A673 (cell line): ENCODE measurements at regions of chr19 and their contacts with region 1.

Region 1: DNA sequence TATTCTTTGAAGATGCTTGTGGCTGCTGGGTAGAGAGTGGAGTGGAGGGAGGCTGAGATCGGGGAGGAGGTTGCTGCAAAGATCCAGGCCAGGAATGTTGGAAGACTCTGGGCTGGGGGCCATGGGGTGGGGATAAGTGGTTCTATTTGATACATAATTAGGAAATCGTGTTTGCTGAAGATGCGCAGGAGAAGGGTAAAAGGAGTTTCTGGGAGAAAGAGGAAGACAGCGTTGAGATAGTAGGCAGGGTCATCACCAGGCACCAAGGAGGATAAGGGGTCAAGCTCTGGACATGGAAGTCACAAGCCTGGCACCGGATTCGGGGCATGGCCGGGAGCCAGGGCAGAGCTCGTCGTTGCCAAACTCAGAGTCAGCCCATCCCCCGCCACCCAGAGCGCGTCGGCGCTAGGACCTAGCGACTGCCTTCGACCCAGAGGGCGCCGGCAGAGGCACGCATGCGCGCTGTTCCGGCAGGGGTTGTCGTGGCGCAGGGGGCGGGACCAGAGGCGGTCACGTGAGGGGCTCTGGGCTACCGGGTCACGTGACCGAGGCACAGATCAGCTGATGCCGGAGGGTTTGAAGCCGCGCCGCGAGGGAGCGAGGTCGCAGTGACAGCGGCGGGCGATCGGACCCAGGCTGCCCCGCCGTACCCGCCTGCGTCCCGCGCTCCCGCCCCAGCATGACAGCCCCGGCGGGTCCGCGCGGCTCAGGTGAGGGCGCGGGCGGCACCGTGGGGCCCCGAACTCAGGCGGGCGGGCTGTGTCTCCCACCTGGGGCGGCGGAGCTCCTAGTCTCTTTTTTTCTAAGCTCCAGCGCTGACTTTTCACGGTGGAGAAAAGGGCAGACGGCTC is at the start of gene MCOLN1:
- DNase-seq: peak; percentile 98
- H3K4me3 ChIP-seq: peak within 1 kb of the TSS; percentile 66
- H3K27ac ChIP-seq: peak within 1 kb of the TSS; percentile 61
- H3K4me1 ChIP-seq: peaks cover 15% of the 10 kb centered on the region
- H3K27me3 ChIP-seq: no peaks in the 10 kb centered on the region
- CTCF ChIP-seq: no peak
- total RNA-seq, gene MCOLN1: 25.7 and 28.4 TPM in 2 replicates

Region 2: GRCh38 chr19:7507884-7508283 is 14.4 kb before region 1 on chr19:
- CTCF ChIA-PET with region 1: no interaction called
- POLR2A ChIA-PET with region 1: interaction called, 14 read pairs
- intact Hi-C with region 1: no loop called
- DNase-seq: peak; percentile 63
- H3K4me3 ChIP-seq: no peak overlapping the region
- H3K27ac ChIP-seq: no peak overlapping the region
- H3K4me1 ChIP-seq: peaks cover 5% of the 10 kb centered on the region
- H3K27me3 ChIP-seq: no peaks in the 10 kb centered on the region
- CTCF ChIP-seq: no peak

Region 3: GRCh38 chr19:7535035-7535992 is 13.0 kb after region 1 on chr19 and contains the start of gene PNPLA6:
- CTCF ChIA-PET with region 1: no interaction called
- POLR2A ChIA-PET with region 1: interaction called, 24 read pairs
- intact Hi-C with region 1: no loop called
- DNase-seq: peak; percentile 97
- H3K4me3 ChIP-seq: peak within 1 kb of the TSS; percentile 73
- H3K27ac ChIP-seq: peak within 1 kb of the TSS; percentile 87
- H3K4me1 ChIP-seq: no peaks in the 10 kb centered on the region
- H3K27me3 ChIP-seq: no peaks in the 10 kb centered on the region
- CTCF ChIP-seq: no peak
- total RNA-seq, gene PNPLA6: 70.4 and 73.9 TPM in 2 replicates